ENCODE measurements at regions of chr15 and their contacts with region 1.

Region 1: DNA sequence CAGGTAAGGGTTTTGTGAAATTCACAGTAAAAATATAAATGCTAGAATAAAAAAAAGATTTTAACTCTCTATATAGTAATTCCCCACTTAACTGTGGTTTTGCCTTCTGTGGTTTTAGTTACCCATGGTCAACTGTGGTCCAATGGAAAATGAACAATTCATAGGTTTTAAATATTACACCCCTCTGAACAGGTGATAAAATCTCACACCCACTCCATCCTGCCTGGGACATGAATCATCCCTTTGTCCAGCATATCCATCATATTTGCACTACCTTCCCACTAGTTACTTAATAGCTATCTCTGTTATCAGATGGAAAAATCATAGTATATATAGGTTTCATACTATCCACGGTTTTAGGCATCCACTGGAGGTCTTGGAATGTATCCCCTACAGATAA is 49.2 kb downstream of the HDGFL3 start:
- DNase-seq: no peak
- H3K4me3 ChIP-seq: no peak overlapping the region
- H3K27ac ChIP-seq: no peak overlapping the region
- H3K4me1 ChIP-seq: no peaks in the 10 kb centered on the region
- H3K27me3 ChIP-seq: no peaks in the 10 kb centered on the region
- CTCF ChIP-seq: no peak
- POLR2A ChIP-seq: no peak

Region 2: GRCh38 chr15:82231842-82232241 is 926.6 kb before region 1 on chr15:
- intact Hi-C with region 1: loop called (anchors 5 kb)
- DNase-seq: no peak
- H3K4me3 ChIP-seq: no peak overlapping the region
- H3K27ac ChIP-seq: no peak overlapping the region
- H3K4me1 ChIP-seq: no peaks in the 10 kb centered on the region
- H3K27me3 ChIP-seq: no peaks in the 10 kb centered on the region
- CTCF ChIP-seq: no peak
- POLR2A ChIP-seq: no peak

Region 3: DNA sequence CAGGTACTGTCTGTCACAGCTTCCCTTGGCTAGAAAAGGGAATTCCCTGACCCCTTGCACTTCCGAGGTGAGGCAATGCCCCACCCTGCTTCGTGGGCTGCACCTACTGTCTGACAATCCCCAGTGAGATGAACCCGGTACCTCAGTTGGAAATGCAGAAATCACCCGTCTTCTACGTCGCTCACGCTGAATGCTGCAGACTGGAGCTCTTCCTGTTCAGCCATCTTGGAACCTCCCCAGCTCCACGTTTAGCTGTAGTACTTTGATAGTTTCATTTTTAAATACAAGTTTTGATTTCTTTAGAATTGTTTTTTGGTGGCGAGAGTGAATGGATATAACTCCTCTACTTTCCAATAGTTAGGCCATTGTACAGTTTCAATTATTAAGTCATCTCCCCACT is 67.0 kb after region 1 on chr15:
- intact Hi-C with region 1: no loop called
- DNase-seq: no peak
- H3K4me3 ChIP-seq: no peak overlapping the region
- H3K27ac ChIP-seq: no peak overlapping the region
- H3K4me1 ChIP-seq: no peaks in the 10 kb centered on the region
- H3K27me3 ChIP-seq: no peaks in the 10 kb centered on the region
- CTCF ChIP-seq: no peak
- POLR2A ChIP-seq: no peak